Motor neuron (in vitro differentiated cells): ENCODE measurements at regions of chr3 and their contacts with region 1.

Region 1: DNA sequence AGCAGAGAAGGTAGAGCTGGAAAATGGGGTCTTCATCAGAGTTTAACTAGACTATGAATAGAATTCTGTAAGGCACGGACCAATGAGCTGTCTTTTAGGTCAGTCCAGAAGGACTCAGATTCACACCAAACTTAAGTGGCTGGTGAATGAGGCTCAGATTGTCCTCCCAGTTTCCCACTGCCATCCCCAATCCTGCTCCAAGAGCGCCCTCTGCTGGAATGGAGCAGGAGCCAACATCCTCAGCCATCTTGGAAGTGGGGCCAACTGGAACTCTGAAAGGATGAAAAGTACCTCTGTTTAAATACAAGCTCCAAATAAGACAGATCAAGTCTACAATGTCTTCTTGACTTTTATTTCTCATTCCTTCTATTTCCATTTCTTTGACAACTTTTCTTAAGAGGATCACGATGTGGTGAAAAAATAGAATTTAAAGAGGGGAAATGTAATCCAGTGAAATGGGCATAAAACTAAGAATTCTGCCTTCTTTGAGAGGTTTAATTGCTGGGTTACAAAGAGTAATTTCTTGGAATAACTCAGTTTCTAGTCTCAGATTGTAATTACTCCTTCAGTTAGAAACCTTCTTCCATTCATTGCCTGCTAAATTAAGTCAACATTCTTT is 217.1 kb upstream of the TPRG1 start:
- ATAC-seq: peak; percentile 81 to 99 (median 85)
- H3K4me3 ChIP-seq: peak overlapping the region in 1 of 5 donors; percentile 14
- H3K27ac ChIP-seq: no peak overlapping the region
- H3K4me1 ChIP-seq: no peaks in the 10 kb centered on the region

Region 2: DNA sequence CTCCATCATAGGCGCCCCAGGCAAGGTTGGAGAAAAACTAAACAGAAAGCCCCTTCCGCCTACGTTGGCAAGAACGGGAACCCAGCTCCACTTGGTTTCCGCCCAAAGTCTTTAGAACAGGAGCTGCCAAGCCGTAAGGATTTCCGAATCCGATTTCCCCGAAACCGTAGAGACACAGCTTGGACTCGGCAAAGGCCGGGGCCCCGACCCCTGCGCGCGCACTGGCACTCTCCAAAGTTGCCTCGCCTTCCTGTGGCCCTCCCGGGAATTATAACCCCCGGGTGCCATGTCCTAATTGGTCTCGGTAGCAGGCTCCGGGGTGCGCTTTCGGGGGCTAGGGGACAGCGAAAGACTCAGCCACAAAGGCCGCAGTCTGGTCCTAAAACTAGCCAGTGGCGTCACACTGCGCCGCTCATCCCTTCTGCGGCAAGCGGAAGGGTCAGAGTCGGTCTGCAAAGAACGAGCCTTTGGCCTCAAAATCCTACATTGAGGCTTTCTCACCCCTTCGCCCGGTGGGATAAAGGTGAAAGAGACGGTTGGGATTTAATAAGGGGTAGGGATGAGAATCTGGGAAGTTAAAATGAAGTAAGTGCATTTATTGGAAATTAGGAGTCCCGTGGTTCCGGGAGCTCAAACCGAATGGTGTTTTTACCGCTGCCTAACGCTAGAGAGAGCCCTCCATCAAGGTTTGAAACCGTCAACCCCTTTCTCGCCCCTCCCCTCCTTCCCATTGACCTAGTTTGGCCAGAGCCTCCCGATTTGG is 1216.2 kb before region 1 on chr3:
- in situ Hi-C with region 1: loop called (anchors 5 to 25 kb)
- ATAC-seq: peak; percentile 6 to 67 (median 58)
- H3K4me3 ChIP-seq: peak overlapping the region; percentile 30 to 54 (median 40)
- H3K27ac ChIP-seq: no peak overlapping the region
- H3K4me1 ChIP-seq: peaks cover 3 to 6% of the 10 kb centered on the region in 2 donors

Region 3: GRCh38 chr3:189148081-189148507 is 193.4 kb after region 1 on chr3:
- in situ Hi-C with region 1: loop called in 1 of 9 experiments (anchors 25 kb)
- ATAC-seq: peak; percentile 30 to 83 (median 58)
- H3K4me3 ChIP-seq: no peak overlapping the region
- H3K27ac ChIP-seq: no peak overlapping the region
- H3K4me1 ChIP-seq: no peaks in the 10 kb centered on the region

Region 4: DNA sequence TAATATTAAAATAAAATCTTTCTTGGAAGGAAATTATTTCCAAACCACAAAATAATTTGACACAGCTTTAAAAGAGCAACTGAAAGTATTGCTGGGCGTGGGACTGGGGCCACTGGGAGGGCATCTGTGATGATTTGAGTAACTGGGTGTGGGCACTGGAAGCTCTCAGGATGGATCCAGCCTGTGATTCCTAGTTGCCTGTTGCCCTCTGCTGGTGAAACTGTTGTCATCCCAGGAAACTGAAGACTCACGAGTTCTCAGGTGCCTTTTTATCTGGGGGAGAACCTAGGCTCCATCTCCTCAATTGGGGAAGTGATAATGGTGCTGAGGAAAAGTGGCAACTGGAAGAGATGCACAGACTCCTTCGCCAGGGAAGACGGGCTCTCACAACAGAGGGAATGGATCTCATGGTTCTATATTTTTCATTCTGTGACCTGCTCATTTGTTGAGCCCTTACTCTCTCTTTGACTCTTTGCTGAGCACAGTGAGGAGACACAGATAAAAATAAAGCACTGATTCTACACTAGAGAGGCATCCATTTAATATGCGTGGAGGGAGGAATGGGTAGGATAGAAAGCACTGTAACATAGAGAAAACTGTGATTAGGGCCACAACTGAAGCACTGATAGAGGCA is 278.6 kb after region 1 on chr3:
- in situ Hi-C with region 1: loop called in 1 of 9 experiments (anchors 25 kb)
- ATAC-seq: peak; percentile 46 to 100 (median 72)
- H3K4me3 ChIP-seq: no peak overlapping the region
- H3K27ac ChIP-seq: no peak overlapping the region
- H3K4me1 ChIP-seq: no peaks in the 10 kb centered on the region